Caco-2 (cell line): ENCODE measurements at regions of chr11 and their contacts with region 1.

Region 1: DNA sequence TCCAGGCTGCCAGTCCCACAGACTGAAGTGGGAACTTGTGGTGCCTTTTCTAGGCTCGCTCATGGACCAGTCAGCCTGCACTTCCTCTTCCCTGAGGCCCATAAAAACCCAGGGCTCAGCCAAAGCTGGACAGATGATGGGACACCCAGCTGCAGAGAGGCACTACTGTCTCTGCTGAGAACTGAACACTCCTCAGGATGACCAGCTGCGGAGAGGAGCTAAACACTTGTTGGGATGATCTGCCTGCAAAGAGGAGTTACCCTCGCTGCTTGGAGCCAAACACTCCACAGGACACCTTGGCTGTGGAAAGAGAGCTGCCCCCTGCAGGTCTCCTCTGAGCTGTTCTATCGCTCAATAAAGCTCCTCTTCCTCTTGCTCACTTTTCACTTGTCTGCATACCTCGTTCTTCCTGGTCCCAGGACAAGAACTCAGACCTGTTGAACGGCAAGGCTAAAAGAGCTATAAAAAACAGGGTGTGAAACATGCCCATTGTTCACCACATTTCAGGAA is 465.5 kb downstream of the GUCY1A2 start:
- DNase-seq: no peak
- H3K4me3 ChIP-seq: no peak overlapping the region
- H3K4me3 Mint-ChIP-seq: no peak overlapping the region
- H3K27ac Mint-ChIP-seq: peak overlapping the region; percentile 75
- H3K4me1 ChIP-seq: peaks cover 38% of the 10 kb centered on the region
- H3K4me1 Mint-ChIP-seq: peaks cover 29% of the 10 kb centered on the region
- H3K27me3 ChIP-seq: no peaks in the 10 kb centered on the region
- H3K27me3 Mint-ChIP-seq: no peaks in the 10 kb centered on the region
- CTCF ChIP-seq: no peak

Region 2: GRCh38 chr11:106224172-106224571 is 328.6 kb before region 1 on chr11:
- CTCF ChIA-PET with region 1: no interaction called
- POLR2A ChIA-PET with region 1: no interaction called
- intact Hi-C with region 1: no loop called
- DNase-seq: no peak
- H3K4me3 ChIP-seq: no peak overlapping the region
- H3K4me3 Mint-ChIP-seq: no peak overlapping the region
- H3K27ac Mint-ChIP-seq: no peak overlapping the region
- H3K4me1 ChIP-seq: no peaks in the 10 kb centered on the region
- H3K4me1 Mint-ChIP-seq: no peaks in the 10 kb centered on the region
- H3K27me3 ChIP-seq: no peaks in the 10 kb centered on the region
- H3K27me3 Mint-ChIP-seq: no peaks in the 10 kb centered on the region
- CTCF ChIP-seq: no peak

Region 3: GRCh38 chr11:106480581-106481190 is 72.1 kb before region 1 on chr11:
- CTCF ChIA-PET with region 1: no interaction called
- POLR2A ChIA-PET with region 1: no interaction called
- intact Hi-C with region 1: loop called (anchors 1 kb)
- DNase-seq: peak in 1 of 2 experiments; percentile 68
- H3K4me3 ChIP-seq: no peak overlapping the region
- H3K4me3 Mint-ChIP-seq: peak overlapping the region; percentile 10
- H3K27ac Mint-ChIP-seq: peak overlapping the region; percentile 86
- H3K4me1 ChIP-seq: peaks cover 66% of the 10 kb centered on the region
- H3K4me1 Mint-ChIP-seq: peaks cover 29% of the 10 kb centered on the region
- H3K27me3 ChIP-seq: no peaks in the 10 kb centered on the region
- H3K27me3 Mint-ChIP-seq: no peaks in the 10 kb centered on the region
- CTCF ChIP-seq: no peak